Activated T-helper 1 cell treated with anti-CD3 and anti-CD28 coated beads, Interleukin-12 subunit alpha, Interleukin-12 subunit beta, Interleukin-2, Interleukin-4 antibody, amounts not matched to agents 30 ng/mL and 10 ng/mL and 1 ng/mL, durations not matched to agents 14 hours and 24 hours and 36 hours (primary cell): ENCODE measurements at regions of chr1 and their contacts with region 1.

Region 1: DNA sequence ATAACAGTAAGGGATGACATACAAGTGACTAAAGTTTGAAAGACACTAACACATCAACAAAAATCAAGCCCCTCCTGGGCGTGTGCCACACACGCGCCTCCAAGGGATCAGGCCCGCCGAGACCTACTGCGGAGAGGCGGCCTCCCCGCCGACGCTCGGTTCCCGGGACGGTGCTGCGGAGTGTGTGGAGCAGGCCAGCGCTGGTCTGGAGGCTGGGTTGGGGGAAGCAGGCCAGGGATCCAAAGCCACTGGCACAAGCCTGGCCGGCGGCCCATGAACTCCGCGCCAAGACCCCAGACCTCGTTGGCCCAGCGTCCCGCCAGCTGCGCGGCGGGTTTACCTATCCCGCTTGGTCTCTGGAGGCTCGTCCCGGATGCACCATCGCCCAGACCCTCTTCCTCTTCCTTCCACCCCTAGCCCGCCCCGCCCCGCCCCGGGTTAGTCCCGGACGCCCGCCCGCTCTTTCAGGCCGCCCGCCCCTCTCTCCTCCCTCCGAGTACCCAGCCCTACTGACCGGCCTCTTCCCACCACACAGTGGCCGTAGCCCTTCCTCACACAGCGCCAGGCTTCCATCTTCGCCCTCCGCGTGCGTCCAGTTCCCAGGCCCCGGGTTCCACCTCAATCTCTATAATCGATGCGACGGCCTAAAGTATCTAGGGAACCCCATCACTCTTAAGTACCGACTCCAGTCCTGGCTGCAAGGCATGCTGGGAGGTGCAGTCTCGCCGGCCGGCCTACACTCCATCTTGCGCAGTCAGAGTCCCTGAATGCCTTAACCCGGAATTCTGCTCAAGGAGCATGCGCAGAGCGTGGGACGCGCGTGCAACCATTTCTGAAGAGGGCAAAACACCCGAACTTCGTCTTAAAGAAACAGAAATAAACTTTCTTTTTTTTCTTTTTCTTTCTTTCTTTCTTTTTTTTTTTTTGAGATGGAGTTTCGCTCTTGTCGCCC is at the start of gene ANGEL2:
- DNase-seq: peak; percentile 95
- H3K4me3 Mint-ChIP-seq: peak within 1 kb of the TSS; percentile 99
- H3K27ac Mint-ChIP-seq: peak within 1 kb of the TSS; percentile 99
- H3K4me1 Mint-ChIP-seq: peaks cover 35% of the 10 kb centered on the region
- H3K27me3 Mint-ChIP-seq: peaks cover 9% of the 10 kb centered on the region
- total RNA-seq, gene ANGEL2: 44.2 and 46.1 TPM in 2 replicates

Region 2: GRCh38 chr1:211258756-211259637 is 1756.4 kb before region 1 on chr1 and contains the start of gene RCOR3:
- intact Hi-C with region 1: loop called (anchors 5 kb)
- DNase-seq: peak; percentile 85
- H3K4me3 Mint-ChIP-seq: peak within 1 kb of the TSS; percentile 90
- H3K27ac Mint-ChIP-seq: peak within 1 kb of the TSS; percentile 90
- H3K4me1 Mint-ChIP-seq: peaks cover 20% of the 10 kb centered on the region
- H3K27me3 Mint-ChIP-seq: peaks cover 4% of the 10 kb centered on the region
- total RNA-seq, gene RCOR3: 40.5 and 41.0 TPM in 2 replicates

Region 3: GRCh38 chr1:212414328-212415106 is 600.9 kb before region 1 on chr1 and contains the start of gene PACC1:
- intact Hi-C with region 1: loop called (anchors 2 kb)
- DNase-seq: peak; percentile 88
- H3K4me3 Mint-ChIP-seq: peak within 1 kb of the TSS; percentile 100
- H3K27ac Mint-ChIP-seq: peak within 1 kb of the TSS; percentile 97
- H3K4me1 Mint-ChIP-seq: peaks cover 21% of the 10 kb centered on the region
- H3K27me3 Mint-ChIP-seq: peaks cover 6% of the 10 kb centered on the region
- total RNA-seq, gene PACC1: 17.6 and 19.8 TPM in 2 replicates

Region 4: GRCh38 chr1:212699104-212699624 is 316.2 kb before region 1 on chr1:
- intact Hi-C with region 1: loop called (anchors 1 kb)
- DNase-seq: peak; percentile 43
- H3K4me3 Mint-ChIP-seq: peak overlapping the region; percentile 92
- H3K27ac Mint-ChIP-seq: peak overlapping the region; percentile 66
- H3K4me1 Mint-ChIP-seq: peaks cover 57% of the 10 kb centered on the region
- H3K27me3 Mint-ChIP-seq: peaks cover 12% of the 10 kb centered on the region

Region 5: GRCh38 chr1:212857992-212858460 is 157.3 kb before region 1 on chr1 and contains the start of gene FLVCR1:
- intact Hi-C with region 1: loop called (anchors 1 kb)
- DNase-seq: peak; percentile 96
- H3K4me3 Mint-ChIP-seq: peak within 1 kb of the TSS; percentile 53
- H3K27ac Mint-ChIP-seq: peak within 1 kb of the TSS; percentile 98
- H3K4me1 Mint-ChIP-seq: peaks cover 15% of the 10 kb centered on the region
- H3K27me3 Mint-ChIP-seq: peaks cover 2% of the 10 kb centered on the region
- total RNA-seq, gene FLVCR1: 18.5 and 18.7 TPM in 2 replicates

Region 6: GRCh38 chr1:212990276-212990675 is 25.1 kb before region 1 on chr1:
- intact Hi-C with region 1: loop called (anchors 1 kb)
- DNase-seq: no peak
- H3K4me3 Mint-ChIP-seq: no peak overlapping the region
- H3K27ac Mint-ChIP-seq: no peak overlapping the region
- H3K4me1 Mint-ChIP-seq: peaks cover under 1% of the 10 kb centered on the region
- H3K27me3 Mint-ChIP-seq: no peaks in the 10 kb centered on the region